ENCODE measurements at regions of chrX and their contacts with region 1.

Region 1: DNA sequence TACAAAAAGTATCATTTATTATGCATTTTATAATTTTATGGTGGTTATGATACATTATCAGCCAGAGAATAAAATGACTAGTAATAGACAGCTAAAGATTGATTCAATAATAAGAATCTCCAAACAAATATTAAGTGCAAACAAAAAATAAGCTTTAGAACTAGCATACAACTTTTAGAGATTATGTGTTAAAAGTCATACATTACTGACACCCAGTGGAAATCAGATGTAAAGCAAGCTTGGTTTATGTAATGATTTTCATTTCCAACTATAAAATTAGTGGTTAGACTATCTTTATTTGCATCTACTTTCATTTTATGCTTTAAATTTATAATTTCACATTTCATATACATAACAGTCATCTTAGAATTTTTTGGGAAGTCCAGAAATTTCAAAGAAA is 57.7 kb downstream of the IL13RA2 start:
- DNase-seq: no peak
- ATAC-seq: no peak

Region 2: GRCh38 chrX:114619874-114620273 is 339.9 kb before region 1 on chrX:
- intact Hi-C with region 1: loop called (anchors 5 to 10 kb)
- DNase-seq: no peak
- ATAC-seq: no peak

Region 3: DNA sequence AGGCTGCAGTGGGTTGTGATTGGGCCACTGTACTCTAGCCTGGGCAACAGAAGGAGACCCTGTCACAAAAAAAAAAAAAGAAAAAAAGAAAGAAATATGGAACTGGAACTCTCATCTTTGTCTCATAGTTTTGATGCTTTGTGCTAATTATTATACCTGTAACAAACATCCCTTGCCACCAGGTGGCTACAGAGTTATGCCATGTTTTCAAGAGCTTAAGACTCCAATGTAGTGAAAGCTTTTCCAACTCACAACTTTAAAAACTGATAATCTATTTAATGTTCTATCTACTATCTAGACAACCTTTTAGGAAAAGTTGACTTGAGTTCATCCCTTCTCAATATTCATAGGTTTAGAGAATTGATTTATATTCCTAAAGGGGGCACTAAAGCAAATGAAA is 333.4 kb before region 1 on chrX:
- intact Hi-C with region 1: loop called (anchors 5 to 10 kb)
- DNase-seq: no peak
- ATAC-seq: no peak